Naive thymus-derived CD4-positive, alpha-beta T cell (primary cell): ENCODE measurements at regions of chr12 and their contacts with region 1.

Region 1: GRCh38 chr12:12845025-12845787 is 32.1 kb downstream of the DDX47 start:
- DNase-seq: no peak
- ATAC-seq: no peak
- H3K4me3 ChIP-seq: no peak overlapping the region
- H3K4me3 Mint-ChIP-seq: peak overlapping the region in 3 of 10 donors; percentile 32 to 56 (median 53)
- H3K27ac ChIP-seq: no peak overlapping the region
- H3K27ac Mint-ChIP-seq: peak overlapping the region in 7 of 9 donors; percentile 38 to 87 (median 78)
- H3K4me1 ChIP-seq: peaks cover 0 to 31% of the 10 kb centered on the region in 2 donors
- H3K4me1 Mint-ChIP-seq: peaks cover 14 to 50% (median 36%) of the 10 kb centered on the region in 7 donors
- H3K27me3 ChIP-seq: no peaks in the 10 kb centered on the region
- H3K27me3 Mint-ChIP-seq: no peaks in the 10 kb centered on the region

Region 2: DNA sequence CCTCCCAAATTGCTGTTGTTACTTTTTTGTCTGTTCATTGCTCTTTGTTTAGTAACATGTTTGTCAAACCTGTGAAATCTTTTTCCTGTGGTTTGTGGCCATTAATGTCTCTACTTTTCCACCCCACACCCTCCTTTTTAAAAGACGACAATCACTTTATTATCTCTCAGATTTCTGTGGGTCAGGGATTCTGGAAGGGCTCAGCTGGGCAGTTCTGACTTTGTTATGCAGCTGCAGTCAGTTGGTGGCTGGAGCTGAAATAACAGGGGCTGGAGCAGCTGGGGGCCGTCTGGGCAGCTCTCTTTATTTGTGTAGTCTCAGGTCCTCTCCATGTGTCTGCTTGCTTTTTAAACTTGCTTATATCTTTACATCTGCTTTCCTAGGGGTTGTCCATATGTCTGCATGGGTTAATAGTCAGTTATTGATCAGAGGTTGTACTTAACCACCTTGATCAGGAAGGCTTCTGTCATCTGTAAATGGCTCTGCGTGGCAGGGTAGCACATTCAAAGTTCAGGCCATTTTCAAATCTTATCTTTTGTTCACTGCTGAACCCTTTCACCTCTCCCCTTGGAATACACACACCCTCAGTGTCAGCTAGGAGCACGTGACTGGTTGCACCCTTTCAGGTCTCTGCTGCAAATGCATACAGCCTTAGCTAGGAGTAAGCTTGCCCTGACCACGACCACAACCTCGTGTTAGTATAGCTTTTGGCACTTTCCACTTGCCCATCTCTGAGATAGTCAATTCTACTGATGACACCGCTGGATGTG is 460.4 kb before region 1 on chr12:
- CTCF ChIA-PET with region 1: no interaction called
- POLR2A ChIA-PET with region 1: no interaction called
- intact Hi-C with region 1: no loop called
- DNase-seq: peak in 1 of 9 donors; percentile 34
- ATAC-seq: peak; percentile 56
- H3K4me3 ChIP-seq: no peak overlapping the region
- H3K4me3 Mint-ChIP-seq: peak overlapping the region in 5 of 10 donors; percentile 5 to 88 (median 30)
- H3K27ac ChIP-seq: no peak overlapping the region
- H3K27ac Mint-ChIP-seq: peak overlapping the region in 7 of 9 donors; percentile 46 to 98 (median 62)
- H3K4me1 ChIP-seq: peaks cover 15 to 57% of the 10 kb centered on the region in 2 donors
- H3K4me1 Mint-ChIP-seq: peaks cover 11 to 64% (median 43%) of the 10 kb centered on the region in 7 donors
- H3K27me3 ChIP-seq: no peaks in the 10 kb centered on the region
- H3K27me3 Mint-ChIP-seq: no peaks in the 10 kb centered on the region

Region 3: DNA sequence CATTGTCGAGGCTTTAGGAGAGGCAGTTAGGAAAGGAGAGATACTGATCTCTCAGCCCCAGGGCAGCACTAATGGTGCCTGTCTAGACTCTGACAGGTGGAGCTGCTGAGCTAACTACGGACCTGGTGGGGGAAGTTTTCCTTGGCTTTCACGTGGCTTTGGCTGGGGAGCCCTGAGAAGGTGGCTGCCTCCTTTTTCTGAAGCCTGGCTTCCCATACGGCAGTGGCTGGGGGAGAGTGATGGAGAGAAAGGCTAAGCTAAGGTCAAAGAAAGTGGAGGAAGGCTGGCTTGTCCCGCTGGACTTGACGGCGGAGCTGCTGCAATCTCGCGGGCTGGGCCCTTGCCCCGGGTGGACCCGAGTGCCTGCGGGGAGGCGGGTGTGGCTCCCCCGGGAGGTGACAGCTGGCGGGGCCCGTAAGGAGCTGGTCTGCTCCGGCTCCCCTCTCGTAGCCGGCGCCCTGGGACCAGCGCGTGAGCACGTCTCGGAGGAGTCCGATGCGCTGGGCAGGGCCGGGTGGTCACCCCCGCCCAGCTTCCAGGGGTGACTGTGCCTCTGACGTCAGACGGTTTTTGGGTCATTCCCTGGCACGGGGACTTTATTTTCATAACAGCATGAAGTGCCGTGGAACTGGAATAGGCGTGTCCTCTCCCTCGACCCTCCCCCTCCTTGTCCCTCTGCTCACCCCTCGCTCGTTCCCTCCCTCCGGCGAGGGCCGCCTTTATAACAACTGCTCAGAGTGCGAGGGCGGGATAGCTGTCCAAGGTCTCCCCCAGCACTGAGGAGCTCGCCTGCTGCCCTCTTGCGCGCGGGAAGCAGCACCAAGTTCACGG is 45.8 kb after region 1 on chr12 and contains the start of gene GPRC5A:
- CTCF ChIA-PET with region 1: interaction called, 3 read pairs
- POLR2A ChIA-PET with region 1: interaction called, 3 read pairs
- intact Hi-C with region 1: loop called in 1 of 2 experiments (anchors 2 kb)
- DNase-seq: peak in 8 of 9 donors; percentile 19 to 50 (median 34)
- ATAC-seq: peak; percentile 73
- H3K4me3 ChIP-seq: peak within 1 kb of the TSS; percentile 65
- H3K4me3 Mint-ChIP-seq: peak within 1 kb of the TSS; percentile 82 to 94 (median 90)
- H3K27ac ChIP-seq: no peak within 1 kb of the TSS
- H3K27ac Mint-ChIP-seq: peak within 1 kb of the TSS in 7 of 9 donors; percentile 34 to 84 (median 72)
- H3K4me1 ChIP-seq: peaks cover 0 to 3% of the 10 kb centered on the region in 2 donors
- H3K4me1 Mint-ChIP-seq: peaks cover 0 to 10% (median 6%) of the 10 kb centered on the region in 7 donors
- H3K27me3 ChIP-seq: peaks cover 0 to 4% of the 10 kb centered on the region in 2 donors
- H3K27me3 Mint-ChIP-seq: peaks cover 6 to 62% (median 14%) of the 10 kb centered on the region in 5 donors
- total RNA-seq, gene GPRC5A: 0.05 to 0.93 (median 0.15) TPM in 4 of 5 experiments, not detected in the other

Region 4: GRCh38 chr12:13135371-13136178 is 290.4 kb after region 1 on chr12:
- CTCF ChIA-PET with region 1: no interaction called
- POLR2A ChIA-PET with region 1: no interaction called
- intact Hi-C with region 1: no loop called
- DNase-seq: no peak
- ATAC-seq: no peak
- H3K4me3 ChIP-seq: no peak overlapping the region
- H3K4me3 Mint-ChIP-seq: no peak overlapping the region
- H3K27ac ChIP-seq: no peak overlapping the region
- H3K27ac Mint-ChIP-seq: no peak overlapping the region
- H3K4me1 ChIP-seq: no peaks in the 10 kb centered on the region
- H3K4me1 Mint-ChIP-seq: peaks cover 0 to 6% (median 0%) of the 10 kb centered on the region in 7 donors
- H3K27me3 ChIP-seq: no peaks in the 10 kb centered on the region
- H3K27me3 Mint-ChIP-seq: peaks cover 0 to 15% (median 3%) of the 10 kb centered on the region in 5 donors